ENCODE measurements at regions of chr9 and their contacts with region 1.

Region 1: DNA sequence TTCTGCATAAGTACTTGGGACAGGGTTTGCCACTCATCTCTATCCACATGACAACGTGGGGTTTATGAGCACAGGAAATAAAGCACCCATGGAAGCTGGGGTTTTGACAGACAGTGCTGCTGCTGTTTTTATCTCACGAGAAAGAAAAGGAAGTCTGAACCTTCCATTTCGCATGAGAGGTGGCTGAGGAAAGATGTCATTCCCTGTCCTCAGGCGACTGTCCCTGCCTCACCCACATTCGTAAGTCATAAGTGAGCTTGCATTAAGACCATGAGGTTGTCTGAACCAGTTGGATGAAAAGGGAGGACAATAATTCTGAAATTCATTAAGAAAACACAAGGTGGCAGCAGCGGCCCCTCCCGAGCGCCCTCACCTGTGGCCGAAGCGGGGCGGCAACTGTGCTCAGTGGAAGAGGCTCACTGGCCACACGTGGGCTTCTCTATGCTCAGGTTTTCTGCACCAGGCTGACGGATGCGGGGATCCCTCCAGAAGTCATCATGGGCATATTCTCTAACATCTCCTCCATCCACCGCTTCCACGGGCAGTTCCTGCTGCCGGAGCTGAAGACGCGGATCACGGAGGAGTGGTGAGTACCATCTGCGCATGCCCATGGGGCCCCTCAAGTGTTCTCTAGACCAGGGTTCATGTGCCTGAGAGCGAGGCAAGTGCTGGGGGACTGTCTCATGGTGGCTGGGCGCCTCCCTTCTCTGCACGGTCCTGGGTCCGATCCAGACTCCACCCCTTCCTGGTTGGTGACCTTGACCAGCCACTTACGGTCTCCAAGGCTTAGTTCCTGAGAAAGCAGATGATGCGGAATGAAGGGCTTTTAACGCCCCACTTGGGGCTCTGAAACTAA is 54.7 kb upstream of the SUSD3 start:
- DNase-seq: peak; percentile 79
- H3K4me3 Mint-ChIP-seq: no peak overlapping the region
- H3K27ac Mint-ChIP-seq: peak overlapping the region; percentile 87
- H3K4me1 Mint-ChIP-seq: peaks cover 52% of the 10 kb centered on the region
- H3K27me3 Mint-ChIP-seq: no peaks in the 10 kb centered on the region

Region 2: DNA sequence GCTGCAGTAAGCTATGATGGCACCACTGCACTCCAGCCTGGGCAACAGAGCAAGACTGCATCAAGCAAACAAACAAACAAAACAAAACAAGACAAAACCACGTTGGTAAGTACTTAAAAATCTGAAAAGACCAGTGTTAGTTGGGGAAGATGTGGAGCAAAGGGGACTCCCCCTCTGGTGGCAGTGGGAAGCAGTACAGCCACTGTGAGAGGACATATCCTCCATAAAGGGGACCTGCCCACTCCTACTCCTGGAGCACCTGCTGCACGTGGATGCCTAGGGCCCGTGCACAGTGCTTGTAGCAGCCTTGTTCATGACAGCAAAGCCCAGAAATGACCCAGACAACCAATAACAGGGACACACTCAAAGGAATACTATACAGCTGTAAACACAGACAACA is 316.8 kb before region 1 on chr9:
- CTCF ChIA-PET with region 1: no interaction called
- POLR2A ChIA-PET with region 1: no interaction called
- intact Hi-C with region 1: no loop called
- DNase-seq: no peak
- H3K4me3 Mint-ChIP-seq: no peak overlapping the region
- H3K27ac Mint-ChIP-seq: no peak overlapping the region
- H3K4me1 Mint-ChIP-seq: no peaks in the 10 kb centered on the region
- H3K27me3 Mint-ChIP-seq: no peaks in the 10 kb centered on the region

Region 3: GRCh38 chr9:92986176-92987085 is 17.3 kb before region 1 on chr9:
- CTCF ChIA-PET with region 1: interaction called, 42 read pairs
- POLR2A ChIA-PET with region 1: interaction called, 4 read pairs
- intact Hi-C with region 1: loop called (anchors 2 kb)
- DNase-seq: peak; percentile 72
- H3K4me3 Mint-ChIP-seq: no peak overlapping the region
- H3K27ac Mint-ChIP-seq: peak overlapping the region; percentile 78
- H3K4me1 Mint-ChIP-seq: peaks cover 76% of the 10 kb centered on the region
- H3K27me3 Mint-ChIP-seq: no peaks in the 10 kb centered on the region

Region 4: DNA sequence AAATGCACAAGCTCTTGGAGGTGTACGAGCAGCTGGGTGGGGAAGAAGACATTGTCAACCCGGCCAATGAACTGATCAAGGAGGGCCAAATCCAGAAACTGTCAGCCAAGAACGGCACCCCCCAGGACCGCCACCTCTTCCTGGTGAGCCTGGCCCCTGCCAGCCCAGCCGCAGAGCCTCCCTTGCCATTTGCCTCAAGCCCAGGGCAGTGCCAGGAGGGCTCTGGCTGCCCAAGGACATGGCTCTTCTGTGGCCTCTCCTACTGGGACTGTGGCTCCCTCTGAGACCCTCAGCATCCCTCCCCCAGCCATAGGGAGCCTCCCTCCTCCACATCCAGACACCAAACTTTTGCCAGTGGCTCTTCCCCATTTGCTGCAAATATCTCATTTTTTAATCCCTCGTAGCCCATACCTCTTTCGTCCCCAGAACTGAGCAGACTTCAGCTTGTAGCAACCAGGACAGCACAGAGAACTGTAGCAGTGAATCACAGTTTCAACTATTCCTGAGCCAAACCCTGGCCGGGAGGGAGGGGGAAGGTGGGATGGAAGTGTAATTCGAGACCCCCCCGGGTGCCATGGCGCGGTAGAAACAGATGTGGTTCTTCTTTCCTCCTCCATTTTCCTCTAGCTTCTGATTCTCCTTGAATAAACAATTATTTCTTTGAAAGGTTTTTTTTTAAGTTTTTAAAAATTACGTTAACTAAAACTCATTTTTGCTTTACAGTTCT is 10.2 kb after region 1 on chr9:
- CTCF ChIA-PET with region 1: interaction called, 23 read pairs
- POLR2A ChIA-PET with region 1: no interaction called
- intact Hi-C with region 1: no loop called
- DNase-seq: no peak
- H3K4me3 Mint-ChIP-seq: no peak overlapping the region
- H3K27ac Mint-ChIP-seq: peak overlapping the region; percentile 71
- H3K4me1 Mint-ChIP-seq: peaks cover 6% of the 10 kb centered on the region
- H3K27me3 Mint-ChIP-seq: no peaks in the 10 kb centered on the region

Region 5: DNA sequence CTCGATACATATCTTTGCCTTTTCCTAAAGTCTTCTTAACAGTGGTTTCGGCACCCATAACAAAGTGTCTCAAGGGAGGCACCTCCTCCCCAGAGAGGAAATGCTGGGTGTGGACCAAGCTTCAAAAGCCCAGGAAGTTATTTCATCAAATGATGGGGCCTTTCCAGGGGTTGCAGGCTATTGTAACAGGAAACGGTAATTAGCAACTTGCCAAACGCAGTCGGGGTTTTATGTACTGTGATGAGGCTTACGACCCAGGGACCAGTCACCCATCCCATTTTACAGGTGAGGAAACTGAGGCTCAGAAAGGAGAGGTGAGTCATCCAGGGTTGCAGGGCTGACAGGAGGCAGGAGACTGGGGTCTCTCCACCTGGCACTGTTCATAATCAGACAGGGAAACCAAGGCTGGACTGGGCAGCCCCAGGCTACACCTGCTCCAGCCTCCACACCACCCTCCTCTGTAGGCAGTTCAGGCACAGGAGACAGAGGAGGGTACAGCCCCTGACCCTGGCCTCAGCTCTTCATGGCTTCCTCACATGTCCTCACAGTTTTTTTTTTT is 24.7 kb after region 1 on chr9:
- CTCF ChIA-PET with region 1: interaction called, 10 read pairs
- POLR2A ChIA-PET with region 1: no interaction called
- intact Hi-C with region 1: no loop called
- DNase-seq: peak; percentile 77
- H3K4me3 Mint-ChIP-seq: peak overlapping the region; percentile 62
- H3K27ac Mint-ChIP-seq: peak overlapping the region; percentile 96
- H3K4me1 Mint-ChIP-seq: peaks cover 78% of the 10 kb centered on the region
- H3K27me3 Mint-ChIP-seq: no peaks in the 10 kb centered on the region

Region 6: GRCh38 chr9:93064392-93065134 is 60.8 kb after region 1 on chr9:
- CTCF ChIA-PET with region 1: interaction called, 17 read pairs
- POLR2A ChIA-PET with region 1: no interaction called
- intact Hi-C with region 1: loop called (anchors 2 kb)
- DNase-seq: peak; percentile 95
- H3K4me3 Mint-ChIP-seq: peak overlapping the region; percentile 87
- H3K27ac Mint-ChIP-seq: peak overlapping the region; percentile 99
- H3K4me1 Mint-ChIP-seq: peaks cover 89% of the 10 kb centered on the region
- H3K27me3 Mint-ChIP-seq: no peaks in the 10 kb centered on the region

Region 7: GRCh38 chr9:93134015-93134739 is 130.4 kb after region 1 on chr9 and contains the start of gene NINJ1:
- CTCF ChIA-PET with region 1: interaction called, 11 read pairs
- POLR2A ChIA-PET with region 1: no interaction called
- intact Hi-C with region 1: no loop called
- DNase-seq: peak; percentile 94
- H3K4me3 Mint-ChIP-seq: peak within 1 kb of the TSS; percentile 94
- H3K27ac Mint-ChIP-seq: peak within 1 kb of the TSS; percentile 89
- H3K4me1 Mint-ChIP-seq: peaks cover 60% of the 10 kb centered on the region
- H3K27me3 Mint-ChIP-seq: no peaks in the 10 kb centered on the region
- total RNA-seq, gene NINJ1: 77.9 to 82.0 TPM